ENCODE measurements at regions of chr6 and their contacts with region 1.

Region 1: DNA sequence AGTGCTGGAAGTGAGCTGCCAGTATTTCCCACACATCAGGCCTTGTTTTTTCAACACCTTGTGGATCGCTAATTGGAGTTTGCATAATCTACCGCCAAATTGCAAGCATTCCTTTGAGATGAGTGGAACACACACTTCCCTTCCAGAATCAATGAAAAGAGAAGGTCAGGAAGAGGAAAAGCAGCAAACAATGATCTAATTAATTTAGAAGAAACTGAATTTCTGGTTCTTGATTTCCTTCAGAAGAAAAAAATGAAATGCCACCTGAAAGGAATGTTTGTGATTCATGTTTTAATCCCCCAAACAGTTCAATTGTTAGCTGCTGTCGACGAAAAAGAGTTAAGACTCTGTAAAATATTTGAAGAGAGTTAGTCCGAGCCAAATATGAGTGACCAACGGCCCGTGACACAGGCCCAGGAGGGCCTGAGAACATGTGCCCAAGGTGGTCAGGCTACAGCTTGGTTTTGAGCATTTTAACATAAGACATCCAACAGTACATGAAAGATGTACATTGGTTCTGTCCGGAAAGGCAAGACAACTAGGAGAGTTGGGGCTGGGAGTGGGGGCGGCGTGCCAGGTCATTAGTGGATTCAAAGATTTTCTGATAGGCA is 182.3 kb downstream of the MTFR2 start:
- DNase-seq: peak; percentile 95
- H3K4me3 ChIP-seq: peak overlapping the region in 1 of 3 experiments; percentile 21
- H3K27ac ChIP-seq: peak overlapping the region; percentile 100
- H3K4me1 ChIP-seq: peaks cover 48% of the 10 kb centered on the region
- H3K27me3 ChIP-seq: no peaks in the 10 kb centered on the region
- CTCF ChIP-seq: no peak
- POLR2A ChIP-seq: peak; percentile 24

Region 2: DNA sequence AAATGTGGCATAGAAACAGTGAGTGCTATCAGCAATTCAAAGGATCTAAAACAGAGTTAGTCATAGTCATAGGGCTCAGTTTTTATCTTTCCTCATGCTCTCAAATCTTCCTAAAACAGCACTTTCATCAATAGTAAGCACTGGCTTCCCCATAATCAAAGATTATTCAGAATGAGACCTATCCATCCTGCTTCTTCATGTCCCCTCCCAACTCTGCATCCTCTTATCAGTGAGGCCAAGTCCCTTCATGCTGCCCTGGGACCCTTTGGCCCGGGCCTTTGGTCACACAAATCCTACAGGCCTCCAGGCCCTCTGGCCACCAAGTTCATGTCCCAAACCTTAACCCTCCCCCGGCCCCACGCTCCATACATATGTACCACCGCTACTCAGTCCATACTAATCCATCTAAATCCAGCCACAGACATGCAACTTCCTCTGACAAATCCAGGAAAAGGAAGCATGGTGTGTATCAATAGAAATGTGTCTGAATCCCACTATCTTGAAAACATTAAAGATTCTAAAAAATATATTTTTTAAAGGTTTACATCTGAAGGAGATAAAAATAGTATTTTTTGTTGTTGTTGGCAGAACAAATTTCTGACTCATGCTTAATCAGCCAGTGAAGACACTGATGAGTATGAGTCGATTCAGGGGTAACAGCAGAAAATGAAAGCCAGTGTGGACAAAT is 72.8 kb before region 1 on chr6:
- CTCF ChIA-PET with region 1: no interaction called
- POLR2A ChIA-PET with region 1: no interaction called
- dilution Hi-C with region 1: no loop called
- intact Hi-C with region 1: loop called (anchors 1 kb)
- DNase-seq: peak; percentile 82
- H3K4me3 ChIP-seq: no peak overlapping the region
- H3K27ac ChIP-seq: peak overlapping the region; percentile 82
- H3K4me1 ChIP-seq: peaks cover 19% of the 10 kb centered on the region
- H3K27me3 ChIP-seq: no peaks in the 10 kb centered on the region
- CTCF ChIP-seq: no peak
- POLR2A ChIP-seq: no peak

Region 3: DNA sequence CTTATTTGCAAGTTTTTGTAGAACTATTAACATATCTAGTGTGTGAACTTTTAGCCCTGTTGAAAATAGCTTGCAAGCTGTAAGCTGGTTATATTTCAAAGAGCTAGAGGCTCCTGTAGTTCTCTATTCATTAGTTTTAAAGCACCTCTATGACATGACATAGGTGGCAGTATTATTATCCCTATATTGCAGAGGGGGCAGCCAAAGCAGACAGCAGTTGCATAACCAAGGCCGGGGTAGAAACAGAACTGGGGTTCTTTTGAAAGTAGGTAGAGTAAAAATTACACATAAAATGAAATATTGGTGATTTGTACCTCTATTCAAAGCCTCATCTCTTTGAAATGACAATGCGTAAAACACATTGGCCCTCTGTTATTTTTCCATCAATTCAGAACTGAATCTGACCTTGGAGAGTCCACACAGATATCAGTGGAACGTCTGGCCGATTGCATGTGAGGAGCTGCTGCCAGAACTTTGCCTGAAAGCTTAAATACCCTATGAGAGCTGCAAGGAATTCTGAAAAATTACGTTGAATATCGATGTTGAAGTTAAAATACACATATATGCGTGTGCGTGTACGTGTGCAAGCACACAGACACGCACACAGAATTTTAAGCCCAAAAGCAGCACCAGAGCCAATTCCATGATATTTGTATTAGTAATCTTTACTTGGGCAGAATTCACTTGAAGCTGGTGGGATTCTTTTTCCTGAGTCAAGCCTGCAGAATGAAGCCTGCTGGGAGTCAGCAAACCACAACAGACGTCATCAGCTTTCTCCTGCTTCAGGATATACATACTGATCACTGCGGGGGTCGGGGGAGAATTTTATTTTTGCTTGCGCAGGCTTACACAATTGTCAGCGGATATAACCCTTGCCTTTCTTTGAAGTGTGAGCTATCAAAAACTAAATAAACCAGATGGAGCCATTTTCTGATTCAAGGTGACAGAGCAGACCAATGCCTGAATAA is 53.1 kb before region 1 on chr6:
- CTCF ChIA-PET with region 1: no interaction called
- POLR2A ChIA-PET with region 1: no interaction called
- dilution Hi-C with region 1: no loop called
- intact Hi-C with region 1: no loop called
- DNase-seq: no peak
- H3K4me3 ChIP-seq: no peak overlapping the region
- H3K27ac ChIP-seq: no peak overlapping the region
- H3K4me1 ChIP-seq: peaks cover 11% of the 10 kb centered on the region
- H3K27me3 ChIP-seq: no peaks in the 10 kb centered on the region
- CTCF ChIP-seq: no peak
- POLR2A ChIP-seq: no peak

Region 4: DNA sequence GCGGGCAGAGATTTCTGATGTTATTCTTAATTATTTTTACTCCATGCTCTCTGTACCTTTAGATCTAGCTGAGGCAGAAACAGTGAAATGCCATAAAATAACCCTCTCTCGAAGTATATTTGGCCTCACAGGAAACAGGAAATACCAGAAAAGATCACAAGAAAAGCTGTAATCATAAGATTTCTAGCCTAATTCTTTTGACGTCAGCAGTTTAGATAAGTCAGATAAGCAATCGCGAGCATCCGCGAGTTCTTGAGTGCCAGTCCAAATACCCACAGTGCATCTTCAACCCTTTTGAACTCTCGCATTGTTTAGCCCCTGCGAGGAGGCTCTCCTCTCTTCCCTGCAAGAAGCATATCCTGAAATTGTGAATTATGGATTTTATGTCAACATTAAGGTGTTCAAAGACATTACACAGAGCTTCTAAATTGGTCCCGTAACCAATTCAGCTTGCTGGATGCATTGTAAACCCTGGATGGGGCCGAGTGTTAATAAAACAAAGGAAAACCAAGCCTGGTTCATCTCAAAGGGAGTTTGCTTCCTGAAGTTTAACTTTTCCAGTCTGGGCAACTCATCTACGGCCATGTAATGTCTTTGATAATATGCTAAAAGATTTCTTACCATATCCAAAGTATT is 16.6 kb before region 1 on chr6:
- CTCF ChIA-PET with region 1: interaction called, 8 read pairs
- POLR2A ChIA-PET with region 1: interaction called, 7 read pairs
- dilution Hi-C with region 1: no loop called
- intact Hi-C with region 1: loop called (anchors 1 kb)
- DNase-seq: peak; percentile 88
- H3K4me3 ChIP-seq: peak overlapping the region in 1 of 3 experiments; percentile 40
- H3K27ac ChIP-seq: peak overlapping the region; percentile 98
- H3K4me1 ChIP-seq: peaks cover 41% of the 10 kb centered on the region
- H3K27me3 ChIP-seq: no peaks in the 10 kb centered on the region
- CTCF ChIP-seq: no peak
- POLR2A ChIP-seq: peak; percentile 65

Region 5: DNA sequence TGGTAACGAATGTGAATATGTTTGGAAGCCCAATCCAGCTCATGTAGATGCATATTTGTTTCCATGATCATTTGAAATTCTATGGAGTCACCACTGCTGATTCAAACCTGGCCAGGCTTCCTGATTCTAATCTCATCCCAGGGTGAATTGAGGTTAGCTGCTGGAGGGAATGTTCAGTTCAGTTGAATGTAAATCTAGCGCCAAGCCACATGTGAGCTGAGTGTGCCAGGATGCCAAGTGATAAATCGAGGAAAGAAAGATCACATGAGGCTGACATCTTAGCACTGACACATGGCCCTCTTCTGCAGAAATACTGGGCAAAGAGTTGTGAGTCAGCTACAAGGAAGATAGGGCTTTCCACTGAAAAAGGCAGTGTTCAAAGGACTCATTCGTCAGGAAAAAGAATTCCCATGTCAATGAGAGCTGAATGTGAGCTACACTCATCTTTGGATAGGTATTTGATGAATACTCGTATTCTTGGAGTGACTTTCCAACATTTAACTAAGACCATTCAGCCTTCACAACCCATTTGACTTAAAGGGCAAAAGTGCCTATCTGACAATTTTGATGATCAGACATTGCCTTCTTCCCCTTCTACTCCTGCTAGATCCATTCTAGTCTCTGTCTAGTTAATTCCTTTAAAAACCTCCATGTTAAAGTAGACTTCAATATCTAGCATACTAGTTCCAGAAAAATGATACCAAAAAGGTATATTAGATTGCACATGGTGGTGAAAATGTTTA is 10.2 kb after region 1 on chr6:
- CTCF ChIA-PET with region 1: interaction called, 7 read pairs
- POLR2A ChIA-PET with region 1: no interaction called
- dilution Hi-C with region 1: no loop called
- intact Hi-C with region 1: loop called (anchors 1 kb)
- DNase-seq: peak; percentile 97
- H3K4me3 ChIP-seq: no peak overlapping the region
- H3K27ac ChIP-seq: peak overlapping the region; percentile 69
- H3K4me1 ChIP-seq: peaks cover 23% of the 10 kb centered on the region
- H3K27me3 ChIP-seq: no peaks in the 10 kb centered on the region
- CTCF ChIP-seq: no peak
- POLR2A ChIP-seq: no peak

Region 6: DNA sequence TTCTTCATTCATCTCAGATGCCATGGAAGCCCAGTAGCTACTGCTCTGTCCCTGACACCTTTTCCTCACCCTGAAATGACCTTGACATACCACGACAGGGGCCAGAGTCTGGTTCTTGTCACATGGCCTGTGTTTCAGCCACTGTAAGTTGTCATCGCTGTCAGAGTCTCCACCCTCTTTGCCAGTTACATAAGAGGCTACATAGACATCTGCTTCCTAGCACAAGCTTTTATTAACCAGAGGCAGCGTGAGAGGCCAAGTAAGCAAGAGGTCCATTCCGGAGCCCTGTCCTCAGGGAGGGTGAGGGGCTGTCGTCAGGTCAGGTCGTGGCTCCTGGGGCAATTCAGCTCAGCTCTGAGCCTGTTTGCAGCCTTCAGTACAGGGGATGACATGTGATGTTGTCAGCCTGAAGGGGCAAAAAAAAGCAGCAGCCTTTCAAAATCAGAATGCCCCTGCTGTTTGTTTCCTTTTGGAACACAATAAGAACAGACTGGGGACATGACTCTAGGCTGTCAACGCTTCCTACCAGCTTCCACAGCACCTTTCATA is 36.0 kb after region 1 on chr6:
- CTCF ChIA-PET with region 1: interaction called, 5 read pairs
- POLR2A ChIA-PET with region 1: no interaction called
- dilution Hi-C with region 1: no loop called
- intact Hi-C with region 1: loop called (anchors 1 kb)
- DNase-seq: peak; percentile 62
- H3K4me3 ChIP-seq: no peak overlapping the region
- H3K27ac ChIP-seq: no peak overlapping the region
- H3K4me1 ChIP-seq: peaks cover 26% of the 10 kb centered on the region
- H3K27me3 ChIP-seq: no peaks in the 10 kb centered on the region
- CTCF ChIP-seq: no peak
- POLR2A ChIP-seq: no peak

Region 7: GRCh38 chr6:136150961-136151360 is 83.1 kb after region 1 on chr6:
- CTCF ChIA-PET with region 1: no interaction called
- POLR2A ChIA-PET with region 1: no interaction called
- dilution Hi-C with region 1: no loop called
- intact Hi-C with region 1: loop called (anchors 1 kb)
- DNase-seq: peak; percentile 60
- H3K4me3 ChIP-seq: no peak overlapping the region
- H3K27ac ChIP-seq: peak overlapping the region; percentile 53
- H3K4me1 ChIP-seq: peaks cover 18% of the 10 kb centered on the region
- H3K27me3 ChIP-seq: no peaks in the 10 kb centered on the region
- CTCF ChIP-seq: no peak
- POLR2A ChIP-seq: no peak

Measured in endothelial cell of umbilical vein (primary cell).